ENCODE measurements at regions of chr2 and their contacts with region 1.

Region 1: GRCh38 chr2:20225294-20226151 is 593 bp upstream of the SDC1 start:
- ATAC-seq: peak; percentile 31 to 80 (median 76)
- H3K4me3 ChIP-seq: peak overlapping the region; percentile 48 to 74 (median 52)
- H3K27ac ChIP-seq: no peak overlapping the region
- H3K4me1 ChIP-seq: peaks cover 20 to 24% of the 10 kb centered on the region in 2 donors

Region 2: GRCh38 chr2:19235308-19235707 is 990.2 kb before region 1 on chr2:
- in situ Hi-C with region 1: no loop called
- ATAC-seq: peak in 3 of 8 experiments; percentile 63 to 90 (median 88)
- H3K4me3 ChIP-seq: no peak overlapping the region
- H3K27ac ChIP-seq: no peak overlapping the region
- H3K4me1 ChIP-seq: no peaks in the 10 kb centered on the region

Region 3: DNA sequence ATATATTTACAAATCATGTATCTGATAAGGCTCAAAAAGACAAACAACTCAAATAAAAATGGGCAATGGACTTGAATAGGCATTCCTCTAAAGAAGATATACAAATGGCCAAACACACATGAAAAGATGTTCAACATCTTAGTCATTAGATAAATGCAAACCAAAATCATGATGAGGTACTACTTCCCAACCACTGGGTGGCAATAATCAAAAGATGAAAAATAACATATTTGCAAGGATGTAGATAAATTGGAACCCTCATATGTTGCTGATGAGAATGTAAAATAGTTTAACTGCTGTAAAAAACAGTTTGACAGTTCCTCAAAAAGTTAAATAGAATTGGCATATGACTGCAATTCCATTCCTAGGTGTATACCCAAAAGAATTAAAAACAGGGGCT is 456.0 kb before region 1 on chr2:
- in situ Hi-C with region 1: no loop called
- ATAC-seq: no peak
- H3K4me3 ChIP-seq: no peak overlapping the region
- H3K27ac ChIP-seq: no peak overlapping the region
- H3K4me1 ChIP-seq: no peaks in the 10 kb centered on the region

Region 4: DNA sequence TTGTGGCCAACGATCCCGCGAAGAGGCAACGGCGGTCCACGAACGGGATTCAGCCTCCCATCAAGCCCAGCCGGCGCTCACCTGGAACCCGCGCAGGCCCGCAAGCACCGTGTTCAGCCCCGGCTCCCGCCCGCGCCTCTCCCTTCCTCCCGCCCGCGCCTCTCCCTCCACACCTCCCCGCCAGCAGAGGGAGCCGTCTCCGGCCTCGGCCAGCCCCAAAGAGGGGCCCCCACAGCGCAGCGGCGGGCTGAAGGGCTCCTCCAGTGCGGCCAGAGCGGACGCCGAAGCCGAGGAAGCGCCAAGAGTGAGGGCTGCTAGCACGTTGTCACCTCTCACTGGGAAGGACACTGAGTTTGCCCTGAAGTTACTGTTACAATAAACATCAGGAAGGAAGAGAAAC is 118.8 kb before region 1 on chr2:
- in situ Hi-C with region 1: loop called in 1 of 9 experiments (anchors 25 kb)
- ATAC-seq: no peak
- H3K4me3 ChIP-seq: no peak overlapping the region
- H3K27ac ChIP-seq: no peak overlapping the region
- H3K4me1 ChIP-seq: peaks cover 8 to 21% of the 10 kb centered on the region in 2 donors